ENCODE measurements at regions of chr17 and their contacts with region 1.

Region 1: GRCh38 chr17:5587438-5588032 is 3.2 kb upstream of the NLRP1 start:
- DNase-seq: no peak
- H3K4me3 ChIP-seq: no peak overlapping the region
- H3K27ac ChIP-seq: no peak overlapping the region
- H3K4me1 ChIP-seq: peaks cover 38% of the 10 kb centered on the region
- H3K27me3 ChIP-seq: peaks cover 31% of the 10 kb centered on the region
- CTCF ChIP-seq: peak; percentile 96

Region 2: DNA sequence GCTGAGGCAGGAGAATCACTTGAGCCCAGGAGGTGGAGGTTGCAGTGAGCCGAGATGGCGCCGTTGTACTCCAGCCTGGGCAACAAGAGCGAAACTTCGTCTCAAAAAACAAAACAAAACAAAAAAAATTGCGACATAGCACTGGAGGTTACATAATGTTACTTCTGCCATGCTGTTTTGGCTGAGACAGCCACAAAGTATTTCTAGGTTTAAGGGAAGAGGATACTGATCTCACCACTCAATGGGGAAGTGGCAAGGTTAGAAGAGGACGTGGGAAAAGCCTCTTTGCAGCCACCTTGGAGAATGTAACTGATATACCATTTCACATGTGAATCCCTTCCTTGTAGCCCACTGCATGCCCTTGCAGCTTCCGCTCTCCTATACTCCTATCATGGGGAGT is 127.9 kb after region 1 on chr17:
- intact Hi-C with region 1: loop called (anchors 10 kb)
- DNase-seq: no peak
- H3K4me3 ChIP-seq: no peak overlapping the region
- H3K27ac ChIP-seq: no peak overlapping the region
- H3K4me1 ChIP-seq: peaks cover 11% of the 10 kb centered on the region
- H3K27me3 ChIP-seq: peaks cover 76% of the 10 kb centered on the region
- CTCF ChIP-seq: no peak

Region 3: GRCh38 chr17:5730373-5730772 is 142.8 kb after region 1 on chr17:
- intact Hi-C with region 1: no loop called
- DNase-seq: no peak
- H3K4me3 ChIP-seq: no peak overlapping the region
- H3K27ac ChIP-seq: no peak overlapping the region
- H3K4me1 ChIP-seq: no peaks in the 10 kb centered on the region
- H3K27me3 ChIP-seq: peaks cover 41% of the 10 kb centered on the region
- CTCF ChIP-seq: no peak

Region 4: GRCh38 chr17:6421700-6422604 is 834.4 kb after region 1 on chr17:
- intact Hi-C with region 1: loop called (anchors 2 kb)
- DNase-seq: peak; percentile 73
- H3K4me3 ChIP-seq: no peak overlapping the region
- H3K27ac ChIP-seq: no peak overlapping the region
- H3K4me1 ChIP-seq: no peaks in the 10 kb centered on the region
- H3K27me3 ChIP-seq: peaks cover 72% of the 10 kb centered on the region
- CTCF ChIP-seq: peak; percentile 90

Measured in left ventricle myocardium inferior (tissue), 1 donor.